WTC11 (cell line): ENCODE measurements at regions of chr1 and their contacts with region 1.

Region 1: GRCh38 chr1:205485338-205486228 is 18.9 kb upstream of the CDK18 start:
- DNase-seq: peak; percentile 81
- ATAC-seq: peak; percentile 75
- H3K4me3 Mint-ChIP-seq: no peak overlapping the region
- H3K27ac Mint-ChIP-seq: no peak overlapping the region
- H3K4me1 Mint-ChIP-seq: peaks cover 33% of the 10 kb centered on the region
- H3K27me3 Mint-ChIP-seq: peaks cover 28% of the 10 kb centered on the region
- CTCF ChIP-seq: peak; percentile 98

Region 2: DNA sequence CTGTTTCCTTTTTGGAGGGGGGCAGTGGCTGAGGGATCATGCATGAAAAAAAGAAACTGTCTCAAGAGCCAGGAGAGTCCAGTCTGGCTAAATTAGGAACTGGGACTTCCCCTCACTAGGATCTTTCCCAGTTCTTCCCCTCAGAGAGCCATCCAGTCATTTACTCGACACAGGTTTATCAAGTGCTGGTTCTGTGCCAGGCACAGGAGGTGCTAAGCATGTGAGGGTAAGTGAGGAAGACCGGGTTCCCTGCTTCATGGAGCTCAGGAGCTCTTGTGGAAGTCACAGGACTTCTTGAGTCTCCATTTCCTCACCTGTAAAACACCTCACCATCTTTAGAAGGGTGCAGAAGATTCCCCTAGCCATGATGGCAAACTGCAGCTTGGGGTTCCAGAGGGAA is 155.4 kb before region 1 on chr1:
- CTCF ChIA-PET with region 1: interaction called, 33 read pairs
- POLR2A ChIA-PET with region 1: no interaction called
- DNase-seq: no peak
- ATAC-seq: no peak
- H3K4me3 Mint-ChIP-seq: no peak overlapping the region
- H3K27ac Mint-ChIP-seq: no peak overlapping the region
- H3K4me1 Mint-ChIP-seq: peaks cover 10% of the 10 kb centered on the region
- H3K27me3 Mint-ChIP-seq: no peaks in the 10 kb centered on the region; the same call in 1 of the 2 replicates
- CTCF ChIP-seq: no peak

Region 3: GRCh38 chr1:205387845-205388244 is 97.7 kb before region 1 on chr1:
- CTCF ChIA-PET with region 1: interaction called, 17 read pairs
- POLR2A ChIA-PET with region 1: no interaction called
- DNase-seq: no peak
- ATAC-seq: no peak
- H3K4me3 Mint-ChIP-seq: no peak overlapping the region
- H3K27ac Mint-ChIP-seq: no peak overlapping the region
- H3K4me1 Mint-ChIP-seq: no peaks in the 10 kb centered on the region
- H3K27me3 Mint-ChIP-seq: no peaks in the 10 kb centered on the region
- CTCF ChIP-seq: no peak

Region 4: GRCh38 chr1:205430696-205431305 is 54.8 kb before region 1 on chr1:
- CTCF ChIA-PET with region 1: interaction called, 210 read pairs
- POLR2A ChIA-PET with region 1: no interaction called
- DNase-seq: peak; percentile 81
- ATAC-seq: peak; percentile 83
- H3K4me3 Mint-ChIP-seq: peak overlapping the region; percentile 83
- H3K27ac Mint-ChIP-seq: no peak overlapping the region
- H3K4me1 Mint-ChIP-seq: peaks cover 31% of the 10 kb centered on the region
- H3K27me3 Mint-ChIP-seq: peaks cover 82% of the 10 kb centered on the region
- CTCF ChIP-seq: peak; percentile 81

Region 5: GRCh38 chr1:205466595-205467181 is 18.9 kb before region 1 on chr1:
- CTCF ChIA-PET with region 1: interaction called, 143 read pairs
- POLR2A ChIA-PET with region 1: no interaction called
- DNase-seq: no peak
- ATAC-seq: no peak
- H3K4me3 Mint-ChIP-seq: no peak overlapping the region
- H3K27ac Mint-ChIP-seq: no peak overlapping the region
- H3K4me1 Mint-ChIP-seq: peaks cover 17% of the 10 kb centered on the region
- H3K27me3 Mint-ChIP-seq: peaks cover 7% of the 10 kb centered on the region
- CTCF ChIP-seq: no peak

Region 6: GRCh38 chr1:205535866-205536758 is 50.5 kb after region 1 on chr1:
- CTCF ChIA-PET with region 1: interaction called, 613 read pairs
- POLR2A ChIA-PET with region 1: no interaction called
- DNase-seq: peak; percentile 3
- ATAC-seq: no peak
- H3K4me3 Mint-ChIP-seq: no peak overlapping the region
- H3K27ac Mint-ChIP-seq: no peak overlapping the region
- H3K4me1 Mint-ChIP-seq: peaks cover 4% of the 10 kb centered on the region; the same call in 1 of the 2 replicates
- H3K27me3 Mint-ChIP-seq: peaks cover 59% of the 10 kb centered on the region
- CTCF ChIP-seq: no peak

Region 7: DNA sequence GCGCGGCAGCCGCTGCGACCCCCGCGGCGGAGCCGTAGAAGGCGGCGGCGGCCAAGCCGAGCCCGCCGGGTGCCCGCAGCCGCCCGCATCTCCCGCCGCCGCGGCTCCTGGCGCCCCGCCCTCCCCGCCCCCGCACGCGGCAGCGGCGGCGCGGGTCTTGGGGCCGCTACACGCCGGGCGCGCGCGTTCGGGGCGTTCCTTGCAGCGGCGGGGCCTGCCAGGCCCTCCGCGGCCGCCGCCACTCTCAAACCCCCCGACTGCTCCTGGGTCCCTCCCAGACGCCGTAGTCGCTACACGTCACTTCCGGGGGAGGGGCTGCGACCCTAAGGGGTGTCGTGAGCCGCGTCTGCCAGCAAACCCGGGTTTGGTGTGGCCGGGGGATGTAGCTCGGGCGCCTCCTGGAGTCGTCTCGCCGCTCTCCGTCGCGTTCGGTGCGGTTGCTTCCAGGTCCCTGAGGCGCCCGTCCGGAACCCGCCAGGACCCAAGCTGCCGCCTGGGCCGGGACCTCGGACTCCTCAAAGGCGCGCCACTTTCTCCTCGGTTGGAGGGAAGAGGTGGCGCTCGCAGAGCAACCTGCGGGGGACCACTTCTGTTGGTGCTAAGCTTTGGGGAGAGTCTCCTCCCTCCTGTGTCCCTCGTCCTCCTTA is 146.3 kb after region 1 on chr1 and contains the start of gene ELK4:
- CTCF ChIA-PET with region 1: no interaction called
- POLR2A ChIA-PET with region 1: no interaction called
- DNase-seq: peak; percentile 99
- ATAC-seq: peak; percentile 89
- H3K4me3 Mint-ChIP-seq: peak within 1 kb of the TSS; percentile 96
- H3K27ac Mint-ChIP-seq: peak within 1 kb of the TSS; percentile 100
- H3K4me1 Mint-ChIP-seq: peaks cover 27% of the 10 kb centered on the region
- H3K27me3 Mint-ChIP-seq: no peaks in the 10 kb centered on the region
- CTCF ChIP-seq: no peak
- total RNA-seq, gene ELK4: 34.4 to 39.0 TPM (median 37.5 TPM) in 3 replicates